Transverse colon (tissue), 4 donors: ENCODE measurements at regions of chr19 and their contacts with region 1.

Region 1: GRCh38 chr19:54231077-54231931 is 8.5 kb upstream of the LILRB3 start:
- DNase-seq: peak; percentile 91
- H3K4me3 ChIP-seq: no peak overlapping the region
- H3K27ac ChIP-seq: no peak overlapping the region
- H3K4me1 ChIP-seq: peaks cover 0 to 3% (median 0%) of the 10 kb centered on the region in 4 donors
- H3K27me3 ChIP-seq: peaks cover 21% of the 10 kb centered on the region
- CTCF ChIP-seq: peak; percentile 79 to 93 (median 92)
- EP300 ChIP-seq: no peak
- POLR2A ChIP-seq: no peak

Region 2: GRCh38 chr19:54159352-54160181 is 71.7 kb before region 1 on chr19 and contains the start of gene LENG1:
- in situ Hi-C with region 1: loop called in 1 of 4 experiments (anchors 10 kb)
- intact Hi-C with region 1: no loop called
- DNase-seq: peak; percentile 100
- H3K4me3 ChIP-seq: peak within 1 kb of the TSS; percentile 48 to 80 (median 76)
- H3K27ac ChIP-seq: peak within 1 kb of the TSS; percentile 92 to 98 (median 94)
- H3K4me1 ChIP-seq: peaks cover 30 to 56% (median 45%) of the 10 kb centered on the region in 4 donors
- H3K27me3 ChIP-seq: no peaks in the 10 kb centered on the region
- CTCF ChIP-seq: peak in 3 of 5 experiments; percentile 21 to 49 (median 26)
- EP300 ChIP-seq: no peak
- POLR2A ChIP-seq: peak; percentile 76
- total RNA-seq, gene LENG1: 3.4 to 11.1 (median 5.8) TPM

Region 3: DNA sequence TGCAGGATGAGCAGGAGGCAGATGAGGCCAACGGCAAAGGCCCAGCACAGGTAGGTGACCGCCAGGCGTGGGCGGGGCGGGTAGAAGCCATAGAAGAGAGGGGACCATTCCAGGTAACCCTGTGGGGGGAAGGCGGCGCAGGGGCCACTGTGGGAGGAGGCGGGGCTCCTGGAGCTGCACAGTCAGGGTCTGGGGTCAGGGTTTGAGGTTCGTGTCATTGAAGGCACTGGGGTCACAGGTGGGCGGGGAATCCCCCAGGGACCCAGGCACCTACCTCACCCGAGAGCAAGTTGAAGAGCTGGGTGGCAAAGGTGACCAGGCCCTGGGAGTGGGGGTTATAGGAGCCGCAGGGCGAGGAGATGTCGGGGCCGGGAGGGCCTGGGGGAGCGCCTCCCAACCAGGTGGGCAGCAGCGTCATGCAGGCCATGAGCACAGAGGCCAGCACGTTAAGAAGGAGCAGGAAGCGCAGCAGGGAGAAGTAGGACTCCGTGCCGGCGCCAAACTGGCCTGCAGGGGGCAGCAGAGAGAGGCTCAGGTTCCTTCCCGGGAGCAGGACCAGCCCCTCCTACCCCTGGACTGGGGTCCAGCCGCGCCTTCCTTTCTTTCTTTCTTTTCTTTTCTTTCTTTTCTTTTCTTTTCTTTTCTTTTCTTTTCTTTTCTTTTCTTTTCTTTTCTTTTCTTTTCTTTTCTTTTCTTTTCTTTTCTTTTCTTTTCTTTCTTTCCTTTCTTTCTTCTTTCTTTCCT is 63.0 kb before region 1 on chr19:
- in situ Hi-C with region 1: loop called in 2 of 4 experiments (anchors 10 kb)
- intact Hi-C with region 1: loop called (anchors 5 kb)
- DNase-seq: peak; percentile 96
- H3K4me3 ChIP-seq: no peak overlapping the region
- H3K27ac ChIP-seq: peak overlapping the region in 1 of 4 donors; percentile 33
- H3K4me1 ChIP-seq: peaks cover 5 to 30% (median 16%) of the 10 kb centered on the region in 4 donors
- H3K27me3 ChIP-seq: peaks cover 7% of the 10 kb centered on the region
- CTCF ChIP-seq: peak; percentile 75 to 98 (median 91)
- EP300 ChIP-seq: no peak
- POLR2A ChIP-seq: no peak

Region 4: DNA sequence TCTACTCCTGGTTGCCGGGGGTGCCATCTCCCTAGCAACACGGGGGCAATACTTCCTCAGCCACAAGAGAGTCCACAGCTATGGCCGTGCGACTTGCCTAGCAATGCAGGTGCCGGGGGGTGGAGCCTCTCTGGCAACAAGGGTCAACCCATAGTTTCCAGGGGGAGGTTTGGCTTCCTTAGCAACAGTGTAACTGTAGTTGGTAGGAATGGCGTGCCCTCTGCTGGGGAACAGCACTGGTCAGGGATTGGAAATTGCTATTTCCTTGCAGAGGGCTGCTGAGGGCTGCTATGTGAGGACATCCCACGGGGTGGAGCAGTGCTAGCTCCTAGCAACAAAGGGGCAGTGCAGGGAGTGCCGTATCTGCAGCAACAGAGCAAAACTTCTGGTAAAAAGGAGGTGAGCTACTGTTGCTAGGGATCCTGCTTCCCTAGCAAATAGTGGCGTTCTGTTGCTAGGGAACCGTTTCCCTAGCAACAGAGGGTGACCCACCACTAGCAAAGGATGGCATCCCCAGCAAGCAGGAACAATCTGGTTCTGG is 51.3 kb before region 1 on chr19:
- in situ Hi-C with region 1: loop called in 2 of 4 experiments (anchors 5 to 10 kb)
- intact Hi-C with region 1: no loop called
- DNase-seq: peak; percentile 79
- H3K4me3 ChIP-seq: no peak overlapping the region
- H3K27ac ChIP-seq: peak overlapping the region in 2 of 4 donors; percentile 10 to 39
- H3K4me1 ChIP-seq: no peaks in the 10 kb centered on the region
- H3K27me3 ChIP-seq: no peaks in the 10 kb centered on the region
- CTCF ChIP-seq: peak in 4 of 5 experiments; percentile 41 to 79 (median 52)
- EP300 ChIP-seq: no peak
- POLR2A ChIP-seq: no peak

Region 5: DNA sequence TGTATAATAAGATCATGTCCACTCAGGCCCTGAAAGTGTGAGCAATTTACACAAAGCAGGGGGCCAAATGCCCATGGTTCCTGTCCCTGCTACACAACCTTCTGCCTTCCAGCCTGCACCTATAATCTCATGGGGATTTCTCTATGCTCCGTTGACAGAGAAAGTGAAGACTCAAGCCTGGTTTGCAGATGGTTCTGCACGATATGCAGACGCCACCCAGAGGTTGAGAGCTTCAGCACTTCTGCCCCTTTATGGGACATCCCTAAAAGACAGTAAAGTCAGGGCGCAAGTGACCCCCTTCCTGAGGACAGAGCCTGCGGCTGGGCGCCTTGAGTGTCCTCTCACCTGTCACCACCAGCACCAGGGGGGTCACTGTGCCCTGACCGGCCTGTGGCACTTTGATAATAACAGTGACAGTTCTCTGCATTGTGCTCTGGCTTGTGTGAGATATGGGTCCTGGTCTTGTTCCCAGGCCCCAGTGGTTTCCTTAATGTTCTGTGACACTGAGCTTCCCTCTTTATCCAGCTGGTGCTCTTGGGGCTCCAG is 66.5 kb after region 1 on chr19:
- in situ Hi-C with region 1: no loop called
- intact Hi-C with region 1: no loop called
- DNase-seq: no peak
- H3K4me3 ChIP-seq: no peak overlapping the region
- H3K27ac ChIP-seq: no peak overlapping the region
- H3K4me1 ChIP-seq: no peaks in the 10 kb centered on the region
- H3K27me3 ChIP-seq: no peaks in the 10 kb centered on the region
- CTCF ChIP-seq: no peak
- EP300 ChIP-seq: no peak
- POLR2A ChIP-seq: no peak

Region 6: DNA sequence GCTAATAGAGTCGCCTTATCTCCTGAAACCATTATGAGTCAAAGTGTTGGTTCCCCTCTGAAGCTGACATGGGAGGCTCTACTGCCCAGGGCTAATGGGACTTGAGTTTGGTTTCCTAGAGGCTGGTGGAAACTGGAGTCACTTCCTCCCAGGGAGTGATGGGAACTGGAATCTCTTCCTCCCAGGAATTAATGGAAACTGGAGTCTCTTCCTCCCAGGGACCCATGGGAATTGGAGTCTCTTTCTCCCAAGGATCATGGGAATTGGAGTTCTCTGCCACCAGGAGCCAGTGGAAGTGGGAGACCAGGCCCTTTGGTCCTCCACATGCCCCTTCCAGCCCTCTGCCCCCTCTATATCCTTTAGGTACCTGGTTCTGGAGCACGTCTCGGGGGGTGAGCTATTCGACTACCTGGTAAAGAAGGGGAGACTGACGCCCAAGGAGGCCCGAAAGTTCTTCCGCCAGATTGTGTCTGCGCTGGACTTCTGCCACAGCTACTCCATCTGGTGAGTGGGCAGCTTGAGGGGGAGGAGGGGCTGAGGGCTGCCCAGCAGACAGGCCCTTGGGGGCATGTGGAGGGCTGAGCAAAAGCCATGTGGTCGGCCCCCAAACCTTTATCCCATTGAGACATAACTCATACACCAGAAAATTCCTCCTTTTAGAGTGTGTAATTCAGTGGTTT is 1058.0 kb after region 1 on chr19:
- in situ Hi-C with region 1: no loop called
- intact Hi-C with region 1: loop called (anchors 5 kb)
- DNase-seq: no peak
- H3K4me3 ChIP-seq: no peak overlapping the region
- H3K27ac ChIP-seq: no peak overlapping the region
- H3K4me1 ChIP-seq: peaks cover 0 to 10% (median 0%) of the 10 kb centered on the region in 4 donors
- H3K27me3 ChIP-seq: peaks cover 9% of the 10 kb centered on the region
- CTCF ChIP-seq: no peak
- EP300 ChIP-seq: no peak
- POLR2A ChIP-seq: no peak